Cardiac septum (tissue), 1 donor: ENCODE measurements at regions of chr3 and their contacts with region 1.

Region 1: DNA sequence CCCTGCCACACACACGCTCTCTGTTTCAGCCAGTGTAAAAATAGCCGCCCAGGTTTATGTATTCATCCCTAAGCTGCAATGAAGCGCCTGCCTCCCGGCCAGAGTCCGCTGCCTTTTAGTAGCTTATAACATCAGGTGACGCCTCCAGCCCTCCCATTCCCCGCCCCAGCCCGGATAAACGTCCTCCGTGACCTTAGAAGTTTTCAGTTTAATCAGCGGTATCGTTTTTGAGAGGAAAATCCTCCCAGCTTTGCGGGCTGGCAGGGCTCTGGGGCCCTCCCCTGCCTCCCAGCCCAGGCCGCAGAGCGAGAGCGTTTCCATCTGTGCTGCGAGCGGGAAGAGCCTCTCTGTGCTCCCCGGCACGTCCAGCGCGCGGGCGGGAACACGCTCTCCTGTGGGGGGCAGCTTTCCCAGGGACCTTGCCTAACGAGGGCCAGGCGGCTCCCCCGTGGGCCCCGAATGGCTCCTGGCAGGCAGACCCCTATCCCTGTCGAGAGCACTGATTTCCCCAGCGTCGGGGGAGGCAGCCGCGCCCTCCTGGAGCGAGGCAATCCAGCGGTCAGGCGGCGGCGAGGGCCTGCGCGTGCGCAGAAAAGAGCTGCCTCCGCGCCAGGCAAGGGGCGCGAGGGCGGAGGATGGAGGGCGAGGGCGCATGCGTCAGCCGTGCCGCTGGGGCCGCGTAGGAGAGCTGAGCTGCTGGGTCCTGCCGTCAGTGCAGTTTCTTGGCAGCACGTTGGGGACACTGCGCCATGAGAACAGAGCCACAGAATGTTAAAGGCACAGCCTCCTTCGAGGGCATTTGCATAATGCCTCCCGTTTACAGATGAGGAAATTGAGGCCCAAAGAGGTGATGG is 71.1 kb downstream of the CCNL1 start:
- DNase-seq: peak; percentile 96

Region 2: DNA sequence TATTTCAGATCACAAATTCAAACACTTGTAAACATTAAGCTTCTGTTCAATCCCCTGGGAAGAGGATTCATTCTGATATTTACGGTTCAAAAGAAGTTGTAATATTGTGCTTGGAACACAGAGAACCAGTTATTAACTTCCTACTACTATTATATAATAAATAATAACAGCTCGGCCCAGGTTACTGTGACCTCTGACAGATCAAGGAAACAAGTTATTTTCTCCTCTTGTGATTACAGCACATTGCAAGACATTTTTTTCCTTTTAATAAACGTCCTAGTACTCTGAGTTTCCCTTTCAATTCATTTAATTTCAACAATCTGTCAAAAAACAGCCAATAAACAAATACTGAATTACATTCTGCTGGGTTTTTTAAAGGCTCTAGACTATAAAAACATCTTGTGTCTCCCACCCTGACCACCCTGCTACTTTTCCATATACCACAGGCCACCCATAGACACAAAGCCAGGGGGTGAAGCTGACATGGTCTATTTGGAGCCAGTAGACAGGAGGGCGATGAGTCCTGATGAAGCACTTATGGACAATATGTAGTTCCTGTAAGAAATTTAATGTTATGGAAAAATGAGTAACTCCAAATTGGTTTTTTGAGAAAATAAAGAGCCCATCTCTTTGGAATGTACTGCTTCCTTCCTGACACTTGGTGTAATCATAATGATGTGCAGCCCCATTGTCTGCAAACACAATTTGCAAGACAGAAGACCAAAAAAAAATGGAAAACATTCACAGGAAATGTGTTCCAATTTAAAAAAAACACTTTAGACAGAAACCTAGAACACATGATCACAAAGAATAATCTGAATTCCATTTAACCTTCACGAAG is 545.9 kb before region 1 on chr3:
- intact Hi-C with region 1: loop called (anchors 5 kb)
- DNase-seq: no peak

Region 3: GRCh38 chr3:156674046-156674910 is 414.6 kb before region 1 on chr3 and contains the start of gene TIPARP:
- intact Hi-C with region 1: loop called (anchors 2 kb)
- DNase-seq: peak; percentile 100
- total RNA-seq, gene TIPARP: 17.9 TPM

Region 4: GRCh38 chr3:157113832-157114505 is 25.1 kb after region 1 on chr3:
- intact Hi-C with region 1: loop called (anchors 2 kb)
- DNase-seq: no peak

Region 5: GRCh38 chr3:157159762-157160657 is 71.2 kb after region 1 on chr3 and contains the start of gene CCNL1:
- intact Hi-C with region 1: loop called (anchors 2 kb)
- DNase-seq: peak; percentile 97
- total RNA-seq, gene CCNL1: 41.7 TPM